Naive thymus-derived CD4-positive, alpha-beta T cell (primary cell): ENCODE measurements at regions of chr2 and their contacts with region 1.

Region 1: DNA sequence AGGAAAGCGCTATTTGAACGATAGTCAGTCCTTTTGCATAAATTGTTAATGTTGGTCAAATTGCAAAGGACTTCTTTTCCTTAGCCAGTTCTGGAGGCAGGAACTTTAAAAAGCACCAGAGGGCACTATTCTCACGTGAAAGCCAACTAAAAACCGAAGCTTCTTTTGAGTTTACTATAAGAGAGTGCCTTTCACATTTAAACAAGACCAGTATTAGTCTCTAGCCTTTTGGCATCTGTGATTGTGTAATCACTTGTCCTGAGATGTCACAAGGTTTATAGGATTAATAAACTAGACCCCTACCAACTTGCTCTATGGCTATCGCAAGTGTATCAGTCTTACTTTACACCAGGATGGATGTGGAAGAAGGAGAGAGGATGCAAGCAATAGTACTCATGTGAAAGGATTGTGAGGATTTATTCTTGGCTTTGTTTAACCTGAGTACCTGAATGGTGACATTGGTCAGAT is 14.4 kb upstream of the STAT4 start:
- DNase-seq: peak in 6 of 9 donors; percentile 22 to 65 (median 52)
- ATAC-seq: peak; percentile 79
- H3K4me3 ChIP-seq: no peak overlapping the region
- H3K4me3 Mint-ChIP-seq: peak overlapping the region in 1 of 10 donors; percentile 50
- H3K27ac ChIP-seq: no peak overlapping the region
- H3K27ac Mint-ChIP-seq: peak overlapping the region in 2 of 9 donors; percentile 51 to 56
- H3K4me1 ChIP-seq: no peaks in the 10 kb centered on the region
- H3K4me1 Mint-ChIP-seq: peaks cover 2 to 18% (median 10%) of the 10 kb centered on the region in 7 donors
- H3K27me3 ChIP-seq: no peaks in the 10 kb centered on the region
- H3K27me3 Mint-ChIP-seq: peaks cover 0 to 8% (median 2%) of the 10 kb centered on the region in 5 donors

Region 2: DNA sequence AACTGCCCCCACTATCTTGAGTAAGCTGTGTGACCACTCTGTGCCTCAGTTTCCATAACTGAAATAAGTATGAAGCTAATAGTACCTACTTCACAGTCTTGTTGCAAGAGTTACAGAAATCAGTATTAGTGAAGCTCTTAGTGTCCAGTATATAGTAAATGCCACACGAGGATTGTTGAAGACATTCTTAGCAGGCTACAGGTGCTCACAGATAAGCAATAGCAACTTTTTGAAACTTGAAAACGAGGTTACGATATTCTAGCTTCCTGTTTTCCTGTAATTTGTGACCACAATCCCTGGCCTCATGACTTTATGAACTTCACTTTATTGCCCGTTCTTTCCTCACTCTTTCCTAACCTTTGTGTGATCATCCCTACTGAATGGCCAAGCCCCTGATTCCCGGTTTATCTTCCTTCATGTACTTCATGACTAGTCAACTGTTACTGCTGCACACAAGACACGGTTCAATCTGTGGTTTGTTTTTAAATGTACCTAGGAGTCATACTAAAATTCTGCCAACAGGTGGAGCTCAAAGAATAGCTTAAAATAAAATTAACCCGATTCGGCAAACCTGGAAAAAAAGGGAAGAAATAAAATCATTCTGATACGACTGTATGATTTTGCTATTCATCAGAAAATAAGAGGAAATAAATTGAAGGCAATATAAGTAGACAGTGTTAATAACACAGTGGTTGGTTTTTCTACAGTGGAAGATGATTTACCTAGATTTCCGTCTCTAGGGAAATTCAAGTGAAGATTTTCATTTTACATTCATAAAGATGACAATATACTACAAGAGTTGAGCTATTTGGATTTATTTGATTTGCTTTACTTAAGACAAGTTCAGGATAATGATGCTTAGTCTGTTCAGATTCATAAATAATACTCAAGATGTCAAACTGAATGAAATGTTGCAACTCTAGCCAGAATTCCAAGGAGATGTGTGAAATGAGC is 113.1 kb before region 1 on chr2:
- CTCF ChIA-PET with region 1: interaction called, 488 read pairs
- POLR2A ChIA-PET with region 1: interaction called, 17 read pairs
- intact Hi-C with region 1: no loop called
- DNase-seq: peak in 7 of 9 donors; percentile 28 to 66 (median 62)
- ATAC-seq: peak; percentile 84
- H3K4me3 ChIP-seq: no peak overlapping the region
- H3K4me3 Mint-ChIP-seq: no peak overlapping the region
- H3K27ac ChIP-seq: peak overlapping the region; percentile 29
- H3K27ac Mint-ChIP-seq: peak overlapping the region in 1 of 9 donors; percentile 80
- H3K4me1 ChIP-seq: peaks cover 26 to 30% of the 10 kb centered on the region in 2 donors
- H3K4me1 Mint-ChIP-seq: peaks cover 8 to 29% (median 22%) of the 10 kb centered on the region in 7 donors
- H3K27me3 ChIP-seq: no peaks in the 10 kb centered on the region
- H3K27me3 Mint-ChIP-seq: no peaks in the 10 kb centered on the region

Region 3: DNA sequence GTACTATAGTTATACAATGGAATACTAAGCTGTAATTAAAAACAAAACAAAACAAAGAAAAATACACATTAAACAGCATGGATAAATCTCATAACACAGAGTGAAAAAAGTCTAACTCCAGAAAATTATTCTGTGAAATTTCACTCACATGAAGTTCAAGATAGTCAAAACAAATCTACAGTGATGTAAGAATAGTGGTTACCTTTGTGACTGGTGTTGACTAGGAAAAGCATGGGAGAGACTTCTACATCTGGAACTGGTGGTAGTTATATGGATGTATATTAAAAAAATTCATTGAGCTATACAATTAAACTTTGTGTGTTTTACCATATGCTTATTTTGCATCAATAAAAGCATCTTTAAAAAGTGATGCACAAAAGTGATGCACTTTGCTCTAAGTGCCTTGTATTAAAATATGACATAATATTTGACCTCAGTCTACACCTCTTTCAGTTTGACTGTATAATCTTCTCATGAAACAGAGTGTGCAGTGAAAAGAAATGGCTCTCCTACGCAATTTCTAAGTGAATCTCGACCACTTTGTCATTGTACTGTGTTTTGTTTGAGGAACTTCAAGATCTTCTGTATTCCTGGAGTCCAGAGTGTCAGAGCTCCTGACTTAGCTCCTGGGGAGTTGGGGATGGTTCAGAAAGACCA is 42.4 kb before region 1 on chr2:
- CTCF ChIA-PET with region 1: no interaction called
- POLR2A ChIA-PET with region 1: no interaction called
- intact Hi-C with region 1: no loop called
- DNase-seq: no peak
- ATAC-seq: no peak
- H3K4me3 ChIP-seq: no peak overlapping the region
- H3K4me3 Mint-ChIP-seq: no peak overlapping the region
- H3K27ac ChIP-seq: no peak overlapping the region
- H3K27ac Mint-ChIP-seq: peak overlapping the region in 2 of 9 donors; percentile 32 to 48
- H3K4me1 ChIP-seq: peaks cover 1 to 29% of the 10 kb centered on the region in 2 donors
- H3K4me1 Mint-ChIP-seq: peaks cover 24 to 75% (median 59%) of the 10 kb centered on the region in 7 donors
- H3K27me3 ChIP-seq: no peaks in the 10 kb centered on the region
- H3K27me3 Mint-ChIP-seq: no peaks in the 10 kb centered on the region

Region 4: DNA sequence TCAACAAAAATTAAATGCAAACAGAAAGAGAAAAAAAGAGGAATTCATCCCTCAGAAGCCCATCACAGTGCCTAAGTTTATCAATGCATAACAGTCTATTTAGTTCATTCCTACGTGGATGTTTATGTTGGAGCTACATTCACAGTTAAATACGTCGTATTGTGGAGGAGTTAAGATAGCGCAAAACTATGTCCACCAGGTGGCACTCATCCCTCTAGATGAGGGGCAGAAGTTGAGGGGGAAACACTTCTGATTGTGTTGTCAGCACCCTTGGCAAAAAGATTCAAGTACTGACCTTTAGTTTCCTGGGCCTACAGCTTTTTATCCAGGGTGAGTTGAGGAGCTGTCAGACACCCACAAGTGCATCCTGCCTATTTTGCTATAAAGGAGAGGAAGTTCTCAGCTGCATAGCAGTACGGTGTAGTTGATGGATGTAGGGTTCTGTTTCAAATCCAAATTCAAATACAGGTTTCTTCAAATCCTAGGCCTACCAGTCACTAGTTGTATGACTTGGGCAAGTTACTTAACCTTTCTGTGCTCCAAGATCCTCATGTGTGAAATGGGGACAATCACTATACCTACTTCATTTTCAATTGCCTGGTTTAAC is 53.2 kb after region 1 on chr2:
- CTCF ChIA-PET with region 1: interaction called, 4 read pairs
- POLR2A ChIA-PET with region 1: no interaction called
- intact Hi-C with region 1: loop called (anchors 1 to 5 kb)
- DNase-seq: peak in 2 of 9 donors; percentile 9 to 10
- ATAC-seq: peak; percentile 66
- H3K4me3 ChIP-seq: no peak overlapping the region
- H3K4me3 Mint-ChIP-seq: no peak overlapping the region
- H3K27ac ChIP-seq: no peak overlapping the region
- H3K27ac Mint-ChIP-seq: no peak overlapping the region
- H3K4me1 ChIP-seq: no peaks in the 10 kb centered on the region
- H3K4me1 Mint-ChIP-seq: peaks cover 0 to 32% (median 5%) of the 10 kb centered on the region in 7 donors
- H3K27me3 ChIP-seq: no peaks in the 10 kb centered on the region
- H3K27me3 Mint-ChIP-seq: no peaks in the 10 kb centered on the region

Region 5: GRCh38 chr2:191369036-191369435 is 203.8 kb after region 1 on chr2:
- CTCF ChIA-PET with region 1: interaction called, 4 read pairs
- POLR2A ChIA-PET with region 1: no interaction called
- intact Hi-C with region 1: loop called (anchors 1 kb)
- DNase-seq: peak in 1 of 9 donors; percentile 5
- ATAC-seq: no peak
- H3K4me3 ChIP-seq: no peak overlapping the region
- H3K4me3 Mint-ChIP-seq: no peak overlapping the region
- H3K27ac ChIP-seq: no peak overlapping the region
- H3K27ac Mint-ChIP-seq: no peak overlapping the region
- H3K4me1 ChIP-seq: no peaks in the 10 kb centered on the region
- H3K4me1 Mint-ChIP-seq: no peaks in the 10 kb centered on the region
- H3K27me3 ChIP-seq: no peaks in the 10 kb centered on the region
- H3K27me3 Mint-ChIP-seq: peaks cover 0 to 9% (median 5%) of the 10 kb centered on the region in 5 donors

Region 6: GRCh38 chr2:191566344-191566743 is 401.1 kb after region 1 on chr2:
- CTCF ChIA-PET with region 1: interaction called, 3 read pairs
- POLR2A ChIA-PET with region 1: no interaction called
- intact Hi-C with region 1: loop called in 1 of 2 experiments (anchors 1 kb)
- DNase-seq: peak; percentile 16 to 64 (median 42)
- ATAC-seq: peak; percentile 72
- H3K4me3 ChIP-seq: no peak overlapping the region
- H3K4me3 Mint-ChIP-seq: no peak overlapping the region
- H3K27ac ChIP-seq: no peak overlapping the region
- H3K27ac Mint-ChIP-seq: no peak overlapping the region
- H3K4me1 ChIP-seq: peaks cover 8 to 14% of the 10 kb centered on the region in 2 donors
- H3K4me1 Mint-ChIP-seq: peaks cover 14 to 34% (median 22%) of the 10 kb centered on the region in 7 donors
- H3K27me3 ChIP-seq: peaks cover 0 to 7% of the 10 kb centered on the region in 2 donors
- H3K27me3 Mint-ChIP-seq: peaks cover 4 to 69% (median 13%) of the 10 kb centered on the region in 5 donors

Region 7: DNA sequence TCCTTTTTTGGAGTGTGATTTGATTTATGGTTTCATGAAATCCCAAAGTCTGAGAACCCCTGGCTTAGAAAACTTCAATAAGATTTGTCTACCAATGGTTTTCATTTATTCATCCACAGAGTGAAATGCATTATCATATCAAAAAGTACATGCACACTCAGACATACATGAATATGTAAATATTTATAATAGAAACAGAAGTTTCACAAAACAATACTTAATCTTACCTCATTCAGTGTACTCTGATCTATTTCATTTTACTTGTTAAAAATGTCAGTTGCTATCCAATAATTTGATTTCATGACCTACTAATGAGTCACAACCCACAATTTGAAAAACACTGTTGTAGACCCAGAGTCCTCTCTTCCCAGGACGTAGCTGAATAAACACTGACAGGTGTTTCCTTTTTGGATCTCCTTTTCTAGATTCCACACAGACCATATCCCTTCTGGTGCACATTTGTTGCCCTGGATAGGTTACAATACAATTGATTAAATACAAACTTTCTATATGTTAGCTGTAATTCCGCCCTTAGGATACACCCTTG is 692.1 kb after region 1 on chr2:
- CTCF ChIA-PET with region 1: no interaction called
- POLR2A ChIA-PET with region 1: no interaction called
- intact Hi-C with region 1: no loop called
- DNase-seq: no peak
- ATAC-seq: no peak
- H3K4me3 ChIP-seq: no peak overlapping the region
- H3K4me3 Mint-ChIP-seq: no peak overlapping the region
- H3K27ac ChIP-seq: no peak overlapping the region
- H3K27ac Mint-ChIP-seq: no peak overlapping the region
- H3K4me1 ChIP-seq: no peaks in the 10 kb centered on the region
- H3K4me1 Mint-ChIP-seq: no peaks in the 10 kb centered on the region
- H3K27me3 ChIP-seq: no peaks in the 10 kb centered on the region
- H3K27me3 Mint-ChIP-seq: peaks cover 11 to 31% (median 28%) of the 10 kb centered on the region in 5 donors